CD4-positive, alpha-beta memory T cell (primary cell): ENCODE measurements at regions of chr15 and their contacts with region 1.

Region 1: GRCh38 chr15:64731012-64731806 is 44.2 kb downstream of the RBPMS2 start:
- DNase-seq: peak; percentile 77 to 83 (median 80)
- H3K4me3 ChIP-seq: no peak overlapping the region
- H3K4me3 Mint-ChIP-seq: no peak overlapping the region
- H3K27ac ChIP-seq: no peak overlapping the region
- H3K27ac Mint-ChIP-seq: peak overlapping the region in 1 of 7 donors; percentile 72
- H3K4me1 ChIP-seq: peaks cover 4% of the 10 kb centered on the region
- H3K4me1 Mint-ChIP-seq: peaks cover 7 to 13% (median 10%) of the 10 kb centered on the region in 4 donors
- H3K27me3 ChIP-seq: no peaks in the 10 kb centered on the region
- H3K27me3 Mint-ChIP-seq: peaks cover 0 to 4% of the 10 kb centered on the region in 2 donors

Region 2: DNA sequence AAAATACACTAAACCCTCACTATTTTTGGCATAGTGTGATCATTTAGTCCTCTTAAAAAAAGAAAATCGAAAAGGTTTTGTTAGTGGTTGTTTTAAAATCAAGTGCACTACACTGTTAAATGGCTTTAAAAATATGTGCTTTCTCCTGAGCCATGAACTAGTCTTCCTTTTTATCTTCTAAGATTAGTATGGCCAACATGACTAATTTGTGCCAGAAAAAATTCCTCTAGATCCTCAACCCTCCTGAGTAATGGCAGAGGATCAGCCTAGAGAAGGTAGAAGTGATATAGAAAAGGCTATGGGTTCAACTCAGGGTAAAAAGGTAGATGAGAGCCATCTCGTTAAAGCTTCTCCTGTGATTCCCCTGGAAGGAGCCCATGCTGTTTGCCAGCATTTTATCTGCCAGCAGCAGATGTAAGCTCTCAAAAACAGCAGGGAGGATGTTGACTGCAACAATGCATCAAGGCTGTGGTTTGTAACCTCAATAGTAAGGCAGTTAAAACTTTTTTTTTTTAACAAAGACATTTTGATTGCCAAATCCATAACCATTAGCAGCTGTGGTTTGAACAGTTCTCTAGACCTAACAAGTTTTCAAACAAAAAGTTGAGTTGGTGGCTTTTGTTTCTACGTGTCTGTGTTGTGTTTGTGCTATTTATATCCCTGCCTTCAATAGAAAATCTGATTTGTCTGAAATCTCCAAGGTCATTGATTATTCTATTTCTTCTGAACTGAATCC is 301.0 kb before region 1 on chr15:
- CTCF ChIA-PET with region 1: interaction called, 43 read pairs
- POLR2A ChIA-PET with region 1: interaction called, 7 read pairs
- intact Hi-C with region 1: no loop called
- DNase-seq: peak; percentile 75 to 85 (median 79)
- H3K4me3 ChIP-seq: peak overlapping the region; percentile 18 to 25
- H3K4me3 Mint-ChIP-seq: peak overlapping the region; percentile 56 to 79 (median 76)
- H3K27ac ChIP-seq: peak overlapping the region; percentile 44
- H3K27ac Mint-ChIP-seq: peak overlapping the region; percentile 87 to 97 (median 91)
- H3K4me1 ChIP-seq: peaks cover 47% of the 10 kb centered on the region
- H3K4me1 Mint-ChIP-seq: peaks cover 31 to 49% (median 45%) of the 10 kb centered on the region in 4 donors
- H3K27me3 ChIP-seq: no peaks in the 10 kb centered on the region
- H3K27me3 Mint-ChIP-seq: no peaks in the 10 kb centered on the region

Region 3: GRCh38 chr15:64681424-64682024 is 49.7 kb before region 1 on chr15:
- CTCF ChIA-PET with region 1: interaction called, 509 read pairs
- POLR2A ChIA-PET with region 1: interaction called, 4 read pairs
- intact Hi-C with region 1: loop called (anchors 1 kb)
- DNase-seq: no peak
- H3K4me3 ChIP-seq: no peak overlapping the region
- H3K4me3 Mint-ChIP-seq: no peak overlapping the region
- H3K27ac ChIP-seq: no peak overlapping the region
- H3K27ac Mint-ChIP-seq: peak overlapping the region in 4 of 7 donors; percentile 22 to 68 (median 48)
- H3K4me1 ChIP-seq: no peaks in the 10 kb centered on the region
- H3K4me1 Mint-ChIP-seq: peaks cover 0 to 7% (median 3%) of the 10 kb centered on the region in 4 donors
- H3K27me3 ChIP-seq: no peaks in the 10 kb centered on the region
- H3K27me3 Mint-ChIP-seq: no peaks in the 10 kb centered on the region

Region 4: GRCh38 chr15:64809649-64810496 is 78.7 kb after region 1 on chr15:
- CTCF ChIA-PET with region 1: interaction called, 29 read pairs
- POLR2A ChIA-PET with region 1: no interaction called
- intact Hi-C with region 1: no loop called
- DNase-seq: peak; percentile 42 to 58 (median 54)
- H3K4me3 ChIP-seq: no peak overlapping the region
- H3K4me3 Mint-ChIP-seq: no peak overlapping the region
- H3K27ac ChIP-seq: no peak overlapping the region
- H3K27ac Mint-ChIP-seq: peak overlapping the region in 3 of 7 donors; percentile 18 to 68 (median 43)
- H3K4me1 ChIP-seq: peaks cover 5% of the 10 kb centered on the region
- H3K4me1 Mint-ChIP-seq: peaks cover 0 to 5% (median 2%) of the 10 kb centered on the region in 4 donors
- H3K27me3 ChIP-seq: no peaks in the 10 kb centered on the region
- H3K27me3 Mint-ChIP-seq: no peaks in the 10 kb centered on the region

Region 5: DNA sequence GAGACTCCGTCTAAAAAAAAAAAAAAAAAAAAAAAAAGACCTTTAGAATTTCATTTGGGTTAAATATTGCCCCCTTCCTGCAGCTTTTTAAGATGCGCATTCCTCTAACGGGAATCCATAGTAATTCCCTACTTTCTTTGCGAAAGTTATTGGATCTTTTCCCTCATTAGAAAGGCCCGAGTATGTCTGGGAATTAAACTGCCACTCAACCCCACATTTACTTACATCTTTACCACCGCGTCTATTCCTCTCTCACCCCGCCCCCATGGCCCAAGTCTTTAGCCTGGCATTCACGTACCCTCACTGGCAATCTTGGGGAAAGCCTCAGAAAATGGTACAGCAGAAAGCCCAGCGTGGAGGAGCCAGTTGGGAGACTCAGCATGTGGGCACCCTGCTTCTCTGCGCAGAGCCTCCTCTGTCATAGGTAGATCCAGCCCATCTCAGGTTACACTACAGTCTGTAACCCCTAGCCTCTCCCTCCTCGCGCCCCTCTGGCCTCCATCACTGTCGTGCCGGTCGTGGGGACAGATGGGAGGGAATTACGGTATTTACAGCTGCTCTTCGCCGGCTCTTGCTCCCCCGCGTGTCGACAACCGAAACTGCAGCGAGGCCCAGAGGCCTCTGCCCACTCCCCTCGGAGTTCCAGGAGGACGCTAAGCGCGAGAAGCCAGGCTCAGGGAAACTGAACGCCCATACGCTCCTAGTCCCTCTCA is 174.1 kb after region 1 on chr15:
- CTCF ChIA-PET with region 1: interaction called, 122 read pairs
- POLR2A ChIA-PET with region 1: interaction called, 3 read pairs
- intact Hi-C with region 1: loop called (anchors 1 kb)
- DNase-seq: peak; percentile 72 to 76 (median 74)
- H3K4me3 ChIP-seq: peak overlapping the region in 1 of 2 donors; percentile 12
- H3K4me3 Mint-ChIP-seq: peak overlapping the region in 7 of 8 donors; percentile 51 to 79 (median 76)
- H3K27ac ChIP-seq: no peak overlapping the region
- H3K27ac Mint-ChIP-seq: peak overlapping the region; percentile 20 to 84 (median 52)
- H3K4me1 ChIP-seq: peaks cover 39% of the 10 kb centered on the region
- H3K4me1 Mint-ChIP-seq: peaks cover 30 to 47% (median 39%) of the 10 kb centered on the region in 4 donors
- H3K27me3 ChIP-seq: no peaks in the 10 kb centered on the region
- H3K27me3 Mint-ChIP-seq: peaks cover 0 to 3% of the 10 kb centered on the region in 2 donors

Region 6: DNA sequence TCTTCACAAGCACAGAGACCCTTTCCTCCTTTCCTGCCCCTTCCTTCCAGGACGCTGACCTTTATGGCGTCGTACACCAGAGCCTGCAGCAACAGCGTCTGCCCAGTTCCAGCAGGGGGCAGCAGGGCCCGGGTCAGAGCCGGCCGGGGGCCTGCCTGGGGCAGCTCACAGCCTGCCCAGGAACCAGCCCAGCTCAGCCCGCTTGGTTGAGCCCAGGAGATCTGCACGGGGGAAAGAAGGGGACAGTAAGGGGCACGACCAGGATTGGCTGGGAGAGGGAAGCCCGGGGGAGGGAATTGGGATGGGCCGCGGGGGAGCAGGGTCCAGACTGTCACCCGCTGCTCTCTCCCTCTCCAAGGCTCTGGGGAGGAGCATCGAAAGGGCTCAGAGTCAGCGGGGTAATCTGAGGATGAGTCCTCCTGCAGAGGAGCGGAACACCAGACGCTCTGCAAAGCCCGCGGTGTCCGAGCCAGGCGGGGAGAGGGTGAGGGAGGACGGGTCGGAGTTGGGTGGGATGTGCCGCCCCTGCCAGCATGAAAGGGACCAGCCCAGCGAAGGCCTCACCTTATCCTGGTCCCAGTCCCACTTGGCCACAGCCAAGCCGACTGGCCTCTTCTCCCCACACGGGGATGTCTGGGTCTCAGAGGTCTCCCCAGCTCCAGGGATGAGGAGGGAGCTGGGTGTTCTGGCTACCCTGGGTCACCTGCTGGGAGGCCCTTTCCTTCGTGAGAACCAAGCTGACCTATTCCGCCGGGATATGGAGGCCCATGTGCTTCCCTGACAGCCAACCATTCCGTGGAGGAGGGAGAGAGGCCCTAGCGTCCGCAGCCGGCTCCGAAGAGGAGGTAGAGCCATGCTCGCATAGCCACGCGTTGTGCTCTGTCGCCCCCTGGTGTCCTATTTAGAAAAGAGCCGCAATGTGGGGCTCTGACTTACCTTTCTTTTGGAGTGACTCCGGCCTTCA is 654.0 kb after region 1 on chr15:
- CTCF ChIA-PET with region 1: no interaction called
- POLR2A ChIA-PET with region 1: no interaction called
- intact Hi-C with region 1: loop called (anchors 1 kb)
- DNase-seq: peak; percentile 78 to 82 (median 78)
- H3K4me3 ChIP-seq: peak overlapping the region; percentile 76 to 78
- H3K4me3 Mint-ChIP-seq: peak overlapping the region; percentile 88 to 97 (median 91)
- H3K27ac ChIP-seq: peak overlapping the region; percentile 46
- H3K27ac Mint-ChIP-seq: peak overlapping the region in 5 of 7 donors; percentile 66 to 90 (median 78)
- H3K4me1 ChIP-seq: peaks cover 11% of the 10 kb centered on the region
- H3K4me1 Mint-ChIP-seq: peaks cover 2 to 17% (median 5%) of the 10 kb centered on the region in 4 donors
- H3K27me3 ChIP-seq: no peaks in the 10 kb centered on the region
- H3K27me3 Mint-ChIP-seq: peaks cover 5 to 10% of the 10 kb centered on the region in 2 donors